ENCODE measurements at regions of chr2 and their contacts with region 1.

Region 1: DNA sequence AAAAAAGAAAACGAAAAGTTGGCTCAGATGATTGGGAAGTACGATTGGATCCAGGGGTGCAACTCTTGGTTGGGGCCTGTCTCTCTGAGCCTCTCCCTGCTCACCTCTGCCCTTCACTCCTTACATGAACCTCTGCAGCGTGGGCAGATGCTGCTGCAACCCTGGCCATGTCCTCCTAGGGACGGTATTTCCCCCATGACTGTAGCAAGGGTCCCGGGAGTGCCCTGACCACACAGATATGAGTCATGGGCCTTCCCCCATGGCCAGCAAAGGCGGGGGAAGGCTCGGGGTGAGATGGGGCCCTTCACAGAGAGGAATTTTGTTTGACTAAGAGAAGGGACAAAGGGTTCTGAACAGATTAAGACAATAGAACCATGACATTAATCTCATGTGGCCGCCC is 129.0 kb downstream of the NCK2 start:
- DNase-seq: peak in 3 of 7 donors; percentile 23 to 31 (median 26)
- H3K4me3 ChIP-seq: no peak overlapping the region
- H3K27ac ChIP-seq: no peak overlapping the region
- H3K4me1 ChIP-seq: no peaks in the 10 kb centered on the region
- H3K27me3 ChIP-seq: no peaks in the 10 kb centered on the region
- CTCF ChIP-seq: no peak
- POLR2A ChIP-seq: no peak

Region 2: GRCh38 chr2:105789745-105790460 is 83.8 kb before region 1 on chr2:
- intact Hi-C with region 1: loop called in 1 of 2 experiments (anchors 10 kb)
- DNase-seq: peak; percentile 76 to 91 (median 85)
- H3K4me3 ChIP-seq: peak overlapping the region in 1 of 4 donors; percentile 5
- H3K27ac ChIP-seq: peak overlapping the region in 3 of 5 donors; percentile 40 to 75 (median 62)
- H3K4me1 ChIP-seq: peaks cover 17 to 45% of the 10 kb centered on the region in 2 donors
- H3K27me3 ChIP-seq: no peaks in the 10 kb centered on the region
- CTCF ChIP-seq: no peak
- POLR2A ChIP-seq: no peak